Endothelial cell of umbilical vein (primary cell): ENCODE measurements at regions of chr12 and their contacts with region 1.

Region 1: GRCh38 chr12:43282106-43282505 is 269.9 kb downstream of the ADAMTS20 start:
- DNase-seq: peak; percentile 72
- H3K4me3 ChIP-seq: no peak overlapping the region
- H3K27ac ChIP-seq: no peak overlapping the region
- H3K4me1 ChIP-seq: peaks cover 51% of the 10 kb centered on the region
- H3K27me3 ChIP-seq: no peaks in the 10 kb centered on the region
- CTCF ChIP-seq: peak in 1 of 2 donors; percentile 14
- POLR2A ChIP-seq: no peak

Region 2: DNA sequence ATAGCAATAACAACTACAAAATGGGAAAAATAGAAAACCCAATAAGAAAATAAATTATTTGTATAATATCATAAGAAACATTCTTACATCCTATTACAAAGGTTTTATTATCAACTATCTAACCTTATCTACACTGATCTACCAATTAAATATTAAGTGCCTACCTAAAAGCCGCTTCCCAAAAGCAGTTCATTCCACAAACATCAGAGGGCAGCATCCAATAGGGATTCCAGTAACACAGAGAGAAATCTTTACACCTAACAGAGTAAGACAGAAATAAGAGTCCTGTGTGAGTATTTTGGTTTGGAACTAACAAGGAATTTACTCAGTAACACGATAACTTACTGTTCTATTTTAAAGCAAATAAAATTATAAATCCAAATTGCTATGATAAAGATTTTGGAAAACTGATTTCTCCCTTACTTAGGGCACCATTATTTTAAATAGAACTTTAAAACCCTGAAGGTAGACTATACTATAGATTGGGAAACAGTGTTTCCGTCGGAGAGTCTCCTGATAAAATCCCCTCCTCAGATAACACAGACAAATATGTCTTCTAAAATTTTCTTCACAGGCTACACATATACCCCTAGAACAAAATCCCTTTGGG is 1152.4 kb before region 1 on chr12:
- CTCF ChIA-PET with region 1: interaction called, 6 read pairs
- POLR2A ChIA-PET with region 1: no interaction called
- dilution Hi-C with region 1: no loop called
- intact Hi-C with region 1: loop called (anchors 5 kb)
- DNase-seq: peak; percentile 86
- H3K4me3 ChIP-seq: no peak overlapping the region
- H3K27ac ChIP-seq: no peak overlapping the region
- H3K4me1 ChIP-seq: peaks cover 22% of the 10 kb centered on the region
- H3K27me3 ChIP-seq: no peaks in the 10 kb centered on the region
- CTCF ChIP-seq: peak; percentile 54 to 62
- POLR2A ChIP-seq: no peak

Region 3: DNA sequence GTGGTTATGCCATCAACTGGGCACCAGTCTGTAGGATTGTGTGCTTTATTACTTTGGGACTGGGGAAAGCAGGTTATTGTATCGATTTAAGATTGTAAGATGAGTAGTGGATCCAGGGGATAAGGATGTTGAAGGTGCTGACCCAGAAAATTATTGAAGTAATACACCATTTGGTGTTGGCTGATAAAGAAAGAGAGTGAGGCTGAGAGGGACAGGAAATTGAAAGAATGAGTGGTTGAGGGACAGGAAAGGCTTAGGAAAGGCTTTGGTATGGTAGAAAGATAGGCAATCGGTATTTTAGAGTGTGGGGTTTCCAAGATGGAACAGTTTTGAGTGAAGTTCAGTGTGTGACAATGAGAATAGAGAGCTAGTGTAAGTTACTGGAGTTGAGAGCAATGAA is 943.8 kb before region 1 on chr12:
- CTCF ChIA-PET with region 1: interaction called, 3 read pairs
- POLR2A ChIA-PET with region 1: no interaction called
- dilution Hi-C with region 1: no loop called
- intact Hi-C with region 1: loop called (anchors 5 kb)
- DNase-seq: peak; percentile 6
- H3K4me3 ChIP-seq: no peak overlapping the region
- H3K27ac ChIP-seq: no peak overlapping the region
- H3K4me1 ChIP-seq: peaks cover 7% of the 10 kb centered on the region
- H3K27me3 ChIP-seq: no peaks in the 10 kb centered on the region
- CTCF ChIP-seq: no peak
- POLR2A ChIP-seq: no peak

Region 4: DNA sequence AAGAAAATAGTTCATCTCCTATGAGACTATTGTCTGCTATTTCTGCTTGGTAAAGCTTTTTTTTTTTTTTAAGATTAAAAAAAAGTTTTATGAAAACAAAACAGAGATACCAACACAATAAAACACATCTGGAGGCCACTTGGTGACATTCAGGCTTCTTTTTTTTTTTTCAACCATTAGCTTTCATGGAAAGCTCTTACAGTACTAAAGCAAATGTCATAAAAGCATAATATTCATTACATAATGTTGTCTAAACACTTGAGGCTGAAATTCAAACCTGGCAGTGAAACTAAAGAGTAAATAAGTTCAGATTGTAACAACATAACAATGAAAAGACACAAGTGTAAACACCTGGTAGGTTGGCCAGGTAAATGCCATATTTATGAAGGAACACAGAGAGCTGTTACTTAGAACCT is 707.2 kb before region 1 on chr12:
- CTCF ChIA-PET with region 1: interaction called, 17 read pairs
- POLR2A ChIA-PET with region 1: no interaction called
- dilution Hi-C with region 1: loop called (anchors 10 kb)
- intact Hi-C with region 1: no loop called
- DNase-seq: peak; percentile 37
- H3K4me3 ChIP-seq: no peak overlapping the region
- H3K27ac ChIP-seq: peak overlapping the region; percentile 35
- H3K4me1 ChIP-seq: peaks cover 59% of the 10 kb centered on the region
- H3K27me3 ChIP-seq: no peaks in the 10 kb centered on the region
- CTCF ChIP-seq: no peak
- POLR2A ChIP-seq: no peak

Region 5: GRCh38 chr12:42790761-42791151 is 491.4 kb before region 1 on chr12:
- CTCF ChIA-PET with region 1: interaction called, 19 read pairs
- POLR2A ChIA-PET with region 1: interaction called, 3 read pairs
- dilution Hi-C with region 1: loop called (anchors 25 kb)
- intact Hi-C with region 1: loop called (anchors 2 kb)
- DNase-seq: peak; percentile 96
- H3K4me3 ChIP-seq: peak overlapping the region in 1 of 3 experiments; percentile 2
- H3K27ac ChIP-seq: peak overlapping the region; percentile 75
- H3K4me1 ChIP-seq: peaks cover 32% of the 10 kb centered on the region
- H3K27me3 ChIP-seq: no peaks in the 10 kb centered on the region
- CTCF ChIP-seq: no peak
- POLR2A ChIP-seq: peak; percentile 60

Region 6: DNA sequence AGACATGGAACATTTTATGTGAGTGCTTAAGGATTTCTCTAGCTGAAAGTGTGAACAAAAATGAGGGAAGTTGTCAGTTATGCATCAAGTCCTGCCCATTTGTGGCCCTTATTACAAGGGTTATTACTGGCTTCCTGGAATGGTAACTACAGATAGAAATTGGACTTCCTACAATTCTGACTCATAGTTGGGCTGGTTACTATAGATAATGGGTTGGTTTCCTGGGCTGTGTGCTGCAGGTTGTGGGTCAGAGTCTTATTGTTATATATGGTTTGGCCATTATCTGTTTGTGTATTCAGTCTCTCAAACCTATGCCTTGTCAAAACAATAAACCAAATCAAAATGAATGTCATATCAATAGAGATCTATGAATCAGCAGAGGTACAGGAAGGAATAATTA is 43.8 kb before region 1 on chr12:
- CTCF ChIA-PET with region 1: interaction called, 15 read pairs
- POLR2A ChIA-PET with region 1: no interaction called
- dilution Hi-C with region 1: no loop called
- intact Hi-C with region 1: loop called (anchors 1 kb)
- DNase-seq: peak; percentile 99
- H3K4me3 ChIP-seq: no peak overlapping the region
- H3K27ac ChIP-seq: peak overlapping the region; percentile 95
- H3K4me1 ChIP-seq: peaks cover 54% of the 10 kb centered on the region
- H3K27me3 ChIP-seq: no peaks in the 10 kb centered on the region
- CTCF ChIP-seq: no peak
- POLR2A ChIP-seq: peak; percentile 94

Region 7: GRCh38 chr12:43370260-43370659 is 88.2 kb after region 1 on chr12:
- CTCF ChIA-PET with region 1: no interaction called
- POLR2A ChIA-PET with region 1: no interaction called
- dilution Hi-C with region 1: no loop called
- intact Hi-C with region 1: no loop called
- DNase-seq: peak; percentile 3
- H3K4me3 ChIP-seq: no peak overlapping the region
- H3K27ac ChIP-seq: no peak overlapping the region
- H3K4me1 ChIP-seq: no peaks in the 10 kb centered on the region
- H3K27me3 ChIP-seq: no peaks in the 10 kb centered on the region
- CTCF ChIP-seq: no peak
- POLR2A ChIP-seq: no peak